Psoas muscle (tissue), 8 donors: ENCODE measurements at regions of chr11 and their contacts with region 1.

Region 1: DNA sequence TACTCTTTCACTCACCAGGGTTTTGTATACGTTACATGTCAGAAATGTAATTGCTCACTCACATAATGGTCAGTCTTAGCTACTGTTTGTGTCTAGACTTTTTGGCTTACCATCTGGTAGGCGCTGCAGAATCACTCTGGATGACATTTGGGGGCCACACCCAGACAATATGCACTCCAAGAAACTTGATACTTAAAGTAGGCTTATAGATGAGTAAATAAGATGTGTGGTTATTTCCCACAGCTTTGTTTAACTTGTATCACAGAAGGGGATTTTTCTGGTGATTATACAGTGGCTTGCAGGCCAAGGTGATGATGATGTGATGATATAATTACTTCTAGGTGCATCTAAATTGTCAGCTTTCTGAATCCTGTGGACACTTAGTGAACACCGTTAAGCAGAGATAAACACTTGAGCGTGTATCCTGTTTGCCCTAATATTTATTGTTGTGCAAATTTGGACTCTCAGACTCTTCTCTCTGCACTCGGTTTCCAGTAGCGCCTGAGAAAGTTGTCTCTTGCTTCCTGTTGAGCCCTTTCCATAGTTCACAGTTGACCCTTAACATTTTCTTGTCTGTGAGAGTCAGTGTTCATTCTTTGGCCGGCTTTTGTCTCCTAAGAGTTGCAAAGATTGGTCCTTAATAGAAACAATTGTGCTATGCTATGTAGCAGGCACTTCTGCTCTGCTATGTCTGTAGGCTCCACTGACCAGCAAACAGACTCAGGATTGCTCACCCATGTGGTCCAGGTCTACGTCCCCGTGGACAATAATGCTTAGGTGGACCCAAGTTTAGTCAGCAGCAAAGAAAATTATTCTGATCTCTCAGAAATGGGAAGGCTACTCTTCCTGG is 89.3 kb downstream of the PRR5L start:
- DNase-seq: no peak
- ATAC-seq: no peak
- H3K4me3 ChIP-seq: no peak overlapping the region
- H3K27ac ChIP-seq: no peak overlapping the region
- H3K4me1 ChIP-seq: no peaks in the 10 kb centered on the region
- H3K27me3 ChIP-seq: no peaks in the 10 kb centered on the region
- CTCF ChIP-seq: no peak

Region 2: GRCh38 chr11:36431429-36432092 is 46.2 kb after region 1 on chr11:
- intact Hi-C with region 1: loop called in 1 of 2 experiments (anchors 10 kb)
- DNase-seq: peak in 1 of 2 donors; percentile 71
- ATAC-seq: peak; percentile 34 to 88 (median 57)
- H3K4me3 ChIP-seq: no peak overlapping the region
- H3K27ac ChIP-seq: no peak overlapping the region
- H3K4me1 ChIP-seq: peaks cover 3% of the 10 kb centered on the region
- H3K27me3 ChIP-seq: no peaks in the 10 kb centered on the region
- CTCF ChIP-seq: no peak

Region 3: DNA sequence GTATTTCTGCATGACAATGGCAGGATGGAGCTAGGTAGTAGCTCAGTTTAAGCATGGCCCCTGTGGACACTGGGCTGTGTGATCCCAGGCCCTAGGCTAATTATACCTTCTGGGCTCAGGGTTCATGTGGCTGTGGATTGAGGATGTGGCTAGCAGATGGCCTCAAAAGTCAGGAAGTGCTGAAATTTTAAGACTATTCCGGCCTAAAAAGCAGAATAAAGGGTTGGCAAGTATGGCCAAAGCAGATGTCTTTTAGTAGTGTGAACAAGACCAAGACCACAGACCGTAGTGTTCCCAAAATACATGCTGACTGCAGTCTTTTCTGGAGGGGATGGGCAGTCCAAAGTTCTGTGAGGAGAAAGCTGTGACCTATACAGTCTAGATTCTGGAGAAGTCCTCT is 328.4 kb after region 1 on chr11:
- intact Hi-C with region 1: no loop called
- DNase-seq: no peak
- ATAC-seq: no peak
- H3K4me3 ChIP-seq: no peak overlapping the region
- H3K27ac ChIP-seq: no peak overlapping the region
- H3K4me1 ChIP-seq: no peaks in the 10 kb centered on the region
- H3K27me3 ChIP-seq: no peaks in the 10 kb centered on the region
- CTCF ChIP-seq: no peak